ENCODE measurements at regions of chr2 and their contacts with region 1.

Region 1: GRCh38 chr2:6454286-6454990 is 411.3 kb downstream of the CMPK2 start:
- DNase-seq: no peak
- ATAC-seq: no peak
- H3K4me3 Mint-ChIP-seq: no peak overlapping the region
- H3K27ac Mint-ChIP-seq: no peak overlapping the region
- H3K4me1 Mint-ChIP-seq: no peaks in the 10 kb centered on the region
- H3K27me3 Mint-ChIP-seq: peaks cover 8% of the 10 kb centered on the region

Region 2: DNA sequence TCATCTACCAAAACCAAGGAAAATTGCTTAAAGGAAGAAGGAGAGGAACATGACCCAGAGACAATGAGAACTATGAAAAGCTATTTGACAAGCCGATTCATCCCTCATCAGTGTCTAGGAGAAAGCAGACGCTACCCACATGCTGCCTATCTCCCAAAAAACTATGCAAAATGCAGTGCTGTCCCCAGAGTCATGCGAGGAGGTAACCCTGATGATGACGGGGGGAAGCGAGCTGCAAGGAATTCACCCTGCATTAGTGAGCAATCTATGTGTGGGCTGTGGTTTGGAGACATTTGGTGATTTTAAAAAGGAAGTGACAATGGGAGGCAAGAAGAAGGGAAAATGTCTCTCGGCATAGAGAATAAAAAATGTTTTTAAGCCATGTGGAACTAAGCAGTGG is 61.5 kb before region 1 on chr2:
- CTCF ChIA-PET with region 1: no interaction called
- POLR2A ChIA-PET with region 1: no interaction called
- intact Hi-C with region 1: no loop called
- DNase-seq: no peak
- ATAC-seq: no peak
- H3K4me3 Mint-ChIP-seq: no peak overlapping the region
- H3K27ac Mint-ChIP-seq: no peak overlapping the region
- H3K4me1 Mint-ChIP-seq: no peaks in the 10 kb centered on the region
- H3K27me3 Mint-ChIP-seq: peaks cover 4% of the 10 kb centered on the region

Region 3: DNA sequence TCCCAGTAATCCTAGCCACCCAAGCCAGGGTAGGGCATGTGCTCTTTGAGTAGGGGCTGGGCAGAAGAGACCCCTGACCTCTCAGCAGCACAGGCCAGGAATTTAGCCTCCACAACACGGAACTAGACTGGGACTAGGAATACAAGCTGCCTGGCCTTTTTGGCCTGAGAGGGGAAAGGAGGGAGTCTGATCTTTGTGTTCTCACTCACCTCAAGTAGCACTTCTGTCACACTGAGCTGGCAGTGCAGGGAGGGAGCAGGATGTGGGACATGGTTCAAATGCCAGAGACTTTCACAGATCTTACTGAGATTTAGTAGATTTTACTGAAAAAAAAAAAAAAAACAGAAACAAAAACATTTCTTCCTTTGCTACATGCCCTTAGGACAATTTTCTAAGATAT is 16.1 kb after region 1 on chr2:
- CTCF ChIA-PET with region 1: no interaction called
- POLR2A ChIA-PET with region 1: no interaction called
- intact Hi-C with region 1: loop called in 1 of 2 experiments (anchors 2 kb)
- DNase-seq: no peak
- ATAC-seq: no peak
- H3K4me3 Mint-ChIP-seq: no peak overlapping the region
- H3K27ac Mint-ChIP-seq: no peak overlapping the region
- H3K4me1 Mint-ChIP-seq: no peaks in the 10 kb centered on the region
- H3K27me3 Mint-ChIP-seq: peaks cover 2% of the 10 kb centered on the region